Activated CD4-positive, alpha-beta T cell treated with anti-CD3 and anti-CD28 coated beads for 36 hours (primary cell): ENCODE measurements at regions of chr3 and their contacts with region 1.

Region 1: DNA sequence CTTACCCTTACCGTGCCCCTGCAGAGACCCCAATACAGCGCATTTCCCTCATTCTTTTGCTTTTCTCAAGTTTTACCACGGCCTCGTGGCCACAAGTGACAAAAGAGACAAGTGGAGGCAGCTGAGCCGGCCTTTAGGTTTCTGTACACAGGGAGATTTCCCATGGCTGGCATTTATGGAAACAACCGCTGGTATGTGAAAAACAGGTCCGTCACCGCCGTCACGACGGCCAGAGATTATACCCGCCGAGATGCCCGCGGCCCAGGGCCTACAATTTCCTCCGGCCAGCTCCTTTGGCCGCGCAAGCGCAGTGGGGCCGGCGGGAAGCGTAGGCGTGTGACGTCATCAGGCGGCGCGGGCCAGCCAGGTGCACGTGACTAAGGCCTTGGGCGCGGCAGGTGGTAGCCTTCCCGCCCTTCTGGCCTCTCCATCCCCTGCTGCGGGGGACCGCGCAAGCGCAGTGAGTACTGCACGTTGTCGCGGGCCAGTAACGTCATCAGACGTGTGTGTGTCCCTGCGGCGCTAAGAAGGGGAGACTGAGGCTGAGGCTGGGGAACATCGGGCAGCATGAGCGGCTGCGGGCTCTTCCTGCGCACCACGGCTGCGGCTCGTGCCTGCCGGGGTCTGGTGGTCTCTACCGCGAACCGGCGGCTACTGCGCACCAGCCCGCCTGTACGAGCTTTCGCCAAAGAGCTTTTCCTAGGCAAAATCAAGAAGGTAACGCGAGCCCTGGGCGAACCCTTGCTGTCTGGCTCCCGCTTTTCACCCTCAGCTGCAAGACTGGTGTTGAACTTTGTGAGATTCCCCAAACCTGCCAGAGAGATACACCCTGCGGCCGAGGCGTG is at the start of gene ACAD9:
- DNase-seq: peak; percentile 98
- ATAC-seq: peak; percentile 92
- H3K4me3 Mint-ChIP-seq: peak within 1 kb of the TSS; percentile 97
- H3K27ac Mint-ChIP-seq: peak within 1 kb of the TSS; percentile 99
- H3K4me1 Mint-ChIP-seq: peaks cover 66% of the 10 kb centered on the region
- H3K27me3 Mint-ChIP-seq: no peaks in the 10 kb centered on the region
- total RNA-seq, gene ACAD9: 60.0 to 70.7 TPM

Region 2: GRCh38 chr3:127672516-127673190 is 1206.7 kb before region 1 on chr3 and contains the start of gene ABTB1:
- CTCF ChIA-PET with region 1: no interaction called
- POLR2A ChIA-PET with region 1: no interaction called
- intact Hi-C with region 1: loop called in 1 of 2 experiments (anchors 1 kb)
- DNase-seq: peak; percentile 94
- ATAC-seq: peak; percentile 90
- H3K4me3 Mint-ChIP-seq: peak within 1 kb of the TSS; percentile 88
- H3K27ac Mint-ChIP-seq: peak within 1 kb of the TSS; percentile 96
- H3K4me1 Mint-ChIP-seq: peaks cover 22% of the 10 kb centered on the region
- H3K27me3 Mint-ChIP-seq: no peaks in the 10 kb centered on the region
- total RNA-seq, gene ABTB1: 8.3 to 9.6 TPM

Region 3: DNA sequence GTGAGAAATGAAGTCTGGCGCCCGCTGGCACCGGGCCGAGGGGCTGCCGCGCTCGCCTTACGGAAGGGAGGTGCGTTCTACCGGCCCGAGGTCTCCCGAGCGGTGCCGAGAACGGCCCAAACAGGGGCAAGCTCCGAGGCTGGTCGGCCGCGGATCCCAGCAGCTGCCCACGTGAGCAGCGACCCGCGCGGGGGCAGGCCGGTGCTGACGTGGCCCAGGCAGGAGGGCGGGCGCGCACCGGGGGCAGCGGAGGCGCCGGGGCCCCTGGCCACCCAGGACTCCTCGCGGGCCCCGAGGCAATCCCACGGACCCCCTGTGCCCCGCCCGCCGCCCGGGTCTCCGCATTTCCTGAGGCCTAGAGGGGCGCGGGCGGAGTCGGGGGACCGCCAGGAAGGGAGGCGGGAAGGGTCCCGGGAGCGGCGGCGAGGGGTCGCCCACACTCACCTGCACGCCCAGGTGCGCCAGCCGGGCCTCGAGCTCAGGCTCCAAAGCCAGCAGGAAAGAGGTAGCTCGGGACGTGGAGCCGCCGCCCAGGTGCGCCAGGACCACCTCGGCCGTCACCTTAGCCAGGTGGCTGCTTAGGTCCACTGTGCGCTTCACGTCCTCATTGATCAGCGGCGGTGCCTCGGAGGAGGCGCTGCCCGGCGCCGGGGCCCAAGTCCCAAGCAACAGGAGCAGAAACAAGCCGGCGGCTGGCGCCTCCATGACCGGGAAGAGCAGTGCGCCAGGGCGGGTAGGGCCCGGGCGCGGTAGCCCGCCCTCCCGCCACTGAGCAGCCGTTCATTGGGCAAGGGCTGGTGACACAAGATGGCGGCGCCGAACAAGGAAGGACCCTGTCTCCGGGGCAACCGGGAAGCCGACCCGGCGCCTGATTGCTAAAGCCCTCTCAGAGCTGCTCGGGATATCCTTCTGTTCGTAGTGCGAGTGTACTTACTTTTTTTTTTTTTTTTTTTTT is 229.0 kb before region 1 on chr3 and contains the start of gene RPN1:
- CTCF ChIA-PET with region 1: interaction called, 9 read pairs
- POLR2A ChIA-PET with region 1: interaction called, 6 read pairs
- intact Hi-C with region 1: loop called (anchors 1 kb)
- DNase-seq: peak; percentile 97
- ATAC-seq: peak; percentile 97
- H3K4me3 Mint-ChIP-seq: peak within 1 kb of the TSS; percentile 81
- H3K27ac Mint-ChIP-seq: peak within 1 kb of the TSS; percentile 85
- H3K4me1 Mint-ChIP-seq: peaks cover 39% of the 10 kb centered on the region
- H3K27me3 Mint-ChIP-seq: no peaks in the 10 kb centered on the region
- total RNA-seq, gene RPN1: 138 to 153 TPM

Region 4: GRCh38 chr3:128804017-128804810 is 75.1 kb before region 1 on chr3:
- CTCF ChIA-PET with region 1: interaction called, 3 read pairs
- POLR2A ChIA-PET with region 1: interaction called, 5 read pairs
- intact Hi-C with region 1: loop called (anchors 1 kb)
- DNase-seq: peak; percentile 78
- ATAC-seq: peak; percentile 76
- H3K4me3 Mint-ChIP-seq: peak overlapping the region; percentile 69
- H3K27ac Mint-ChIP-seq: peak overlapping the region; percentile 97
- H3K4me1 Mint-ChIP-seq: peaks cover 86% of the 10 kb centered on the region
- H3K27me3 Mint-ChIP-seq: no peaks in the 10 kb centered on the region

Region 5: DNA sequence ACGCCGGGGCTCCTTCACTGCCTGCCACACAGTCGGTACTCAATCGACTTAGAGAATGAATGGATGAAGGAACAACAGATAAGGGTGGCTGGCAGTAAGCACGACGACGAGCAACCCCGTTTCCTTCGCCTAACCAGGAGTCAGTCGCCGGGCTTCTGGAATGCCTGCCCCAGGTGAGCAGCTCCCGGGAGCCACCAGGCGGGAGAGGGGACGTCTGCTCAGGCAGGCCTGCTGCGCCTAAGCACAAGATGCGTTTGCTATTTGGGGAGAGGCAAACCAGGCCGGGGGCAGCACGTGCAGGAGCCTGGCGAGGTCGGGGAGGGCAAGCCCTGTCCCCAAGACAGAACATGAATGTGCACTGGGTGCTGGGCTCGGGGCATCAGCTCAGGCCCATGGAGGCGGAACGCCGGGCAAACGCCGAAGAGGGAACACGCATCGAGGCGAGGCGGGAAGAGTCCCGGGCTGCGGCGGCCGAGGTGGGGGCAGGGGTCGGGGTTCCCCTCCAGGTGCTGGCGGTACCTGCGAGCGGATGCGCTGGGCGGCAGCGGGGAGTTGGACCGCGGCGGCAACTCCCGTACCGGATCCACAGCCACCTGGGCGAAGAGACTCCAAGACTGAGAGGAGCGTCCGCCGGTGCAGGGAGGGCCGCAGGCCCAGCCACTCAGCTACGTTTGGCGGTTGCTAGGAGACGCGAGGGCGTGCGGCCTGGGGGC is 114.3 kb after region 1 on chr3 and contains the start of gene CFAP92:
- CTCF ChIA-PET with region 1: no interaction called
- POLR2A ChIA-PET with region 1: no interaction called
- intact Hi-C with region 1: loop called in 1 of 2 experiments (anchors 1 kb)
- DNase-seq: peak; percentile 95
- ATAC-seq: peak; percentile 97
- H3K4me3 Mint-ChIP-seq: peak within 1 kb of the TSS; percentile 63
- H3K27ac Mint-ChIP-seq: peak within 1 kb of the TSS; percentile 49
- H3K4me1 Mint-ChIP-seq: peaks cover 32% of the 10 kb centered on the region
- H3K27me3 Mint-ChIP-seq: no peaks in the 10 kb centered on the region
- total RNA-seq, gene CFAP92: 0.64 to 0.88 TPM

Region 6: GRCh38 chr3:129160891-129161859 is 281.8 kb after region 1 on chr3 and contains the start of gene ISY1:
- CTCF ChIA-PET with region 1: no interaction called
- POLR2A ChIA-PET with region 1: no interaction called
- intact Hi-C with region 1: loop called in 1 of 2 experiments (anchors 1 kb)
- DNase-seq: peak; percentile 93
- ATAC-seq: peak; percentile 81
- H3K4me3 Mint-ChIP-seq: peak within 1 kb of the TSS; percentile 93
- H3K27ac Mint-ChIP-seq: peak within 1 kb of the TSS; percentile 98
- H3K4me1 Mint-ChIP-seq: peaks cover 30% of the 10 kb centered on the region
- H3K27me3 Mint-ChIP-seq: no peaks in the 10 kb centered on the region
- total RNA-seq, gene ISY1: 44.9 to 65.5 TPM

Region 7: GRCh38 chr3:129399145-129399894 is 520.0 kb after region 1 on chr3:
- CTCF ChIA-PET with region 1: no interaction called
- POLR2A ChIA-PET with region 1: no interaction called
- intact Hi-C with region 1: loop called in 1 of 2 experiments (anchors 1 kb)
- DNase-seq: peak; percentile 90
- ATAC-seq: peak; percentile 82
- H3K4me3 Mint-ChIP-seq: peak overlapping the region; percentile 99
- H3K27ac Mint-ChIP-seq: peak overlapping the region; percentile 98
- H3K4me1 Mint-ChIP-seq: peaks cover 29% of the 10 kb centered on the region
- H3K27me3 Mint-ChIP-seq: no peaks in the 10 kb centered on the region